Right ventricle myocardium superior (tissue), 1 donor: ENCODE measurements at regions of chr19 and their contacts with region 1.

Region 1: GRCh38 chr19:48872182-48872883 is at the start of gene PPP1R15A:
- DNase-seq: peak; percentile 99
- ATAC-seq: peak; percentile 82
- total RNA-seq, gene PPP1R15A: 60.4 TPM

Region 2: DNA sequence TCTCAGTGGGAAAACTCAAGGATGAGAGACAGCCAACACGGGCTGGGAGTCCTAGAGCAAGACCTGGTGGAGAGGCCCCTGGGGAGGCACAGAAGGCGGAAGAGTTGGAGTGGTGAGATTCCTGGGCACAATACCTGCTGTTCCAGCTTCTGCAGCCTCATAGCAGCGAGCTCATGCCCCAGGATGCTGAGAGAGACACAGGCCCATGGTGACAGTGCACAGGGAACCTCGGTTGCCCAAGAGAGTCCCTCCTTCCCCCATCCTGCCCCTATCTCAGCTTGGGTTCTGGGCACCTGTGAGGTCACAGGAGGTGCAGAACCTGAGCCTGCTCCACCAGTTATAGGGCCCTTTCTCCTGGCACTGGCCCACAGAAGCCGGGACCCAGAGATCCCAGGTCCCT is 24.9 kb after region 1 on chr19:
- intact Hi-C with region 1: loop called (anchors 1 kb)
- DNase-seq: no peak
- ATAC-seq: no peak

Region 3: GRCh38 chr19:48965040-48965805 is 92.9 kb after region 1 on chr19 and contains the start of gene FTL:
- intact Hi-C with region 1: loop called (anchors 5 kb)
- DNase-seq: peak; percentile 99
- ATAC-seq: peak; percentile 87
- total RNA-seq, gene FTL: 748 TPM